MCF 10A (cell line): ENCODE measurements at regions of chr4 and their contacts with region 1.

Region 1: DNA sequence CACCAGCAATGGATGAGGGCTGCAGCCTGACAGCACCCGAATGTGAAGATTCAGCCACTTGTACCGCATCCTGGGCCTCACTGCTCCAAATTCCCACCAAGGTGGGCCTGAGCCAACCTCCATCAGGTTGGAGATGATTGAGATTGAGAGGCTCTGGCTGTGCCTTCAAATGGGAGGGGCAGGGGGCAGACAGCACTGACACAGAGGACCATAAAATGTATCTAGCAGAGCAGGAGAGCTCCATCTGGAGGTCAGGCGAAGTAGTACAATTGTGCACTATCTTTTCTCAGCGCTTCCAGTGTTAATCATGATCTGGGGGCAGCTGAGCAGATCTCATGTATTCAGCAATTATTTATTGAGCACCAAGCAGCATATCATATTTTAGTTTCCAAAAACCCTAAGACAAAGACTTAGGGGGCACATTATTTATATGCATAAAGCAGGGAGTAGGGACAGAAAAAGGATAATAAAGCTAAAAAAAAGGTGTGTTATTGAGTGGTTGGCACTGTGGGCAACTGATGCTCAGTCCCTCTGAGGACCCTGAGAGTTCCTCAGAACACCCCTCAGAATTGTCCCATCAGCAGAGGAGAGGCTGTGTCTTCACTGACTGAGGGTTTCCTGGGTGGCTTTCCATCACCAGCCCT is 31.6 kb upstream of the C1QTNF7 start:
- DNase-seq: peak; percentile 63
- H3K4me3 Mint-ChIP-seq: no peak overlapping the region
- H3K27ac Mint-ChIP-seq: no peak overlapping the region
- H3K4me1 Mint-ChIP-seq: peaks cover 32% of the 10 kb centered on the region
- H3K27me3 Mint-ChIP-seq: no peaks in the 10 kb centered on the region
- CTCF ChIP-seq: peak; percentile 46

Region 2: DNA sequence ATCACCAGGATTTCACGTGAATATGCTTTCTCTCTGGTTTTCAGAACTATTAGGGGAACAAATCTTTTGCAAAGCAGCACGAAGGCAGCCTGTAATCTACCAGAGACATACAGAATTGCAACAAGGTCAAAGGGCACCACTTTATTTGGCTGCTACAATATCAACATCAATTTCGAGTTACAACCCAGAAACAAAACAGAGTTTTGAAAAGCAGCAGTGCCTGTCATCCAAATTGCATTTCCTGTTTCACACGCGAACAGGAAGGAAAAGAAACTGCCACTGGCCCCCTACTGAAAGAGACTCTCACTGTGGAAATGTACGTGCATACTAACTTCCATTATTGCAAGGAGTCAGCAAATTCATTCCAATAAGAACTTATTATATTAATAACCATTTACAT is 14.5 kb after region 1 on chr4:
- CTCF ChIA-PET with region 1: interaction called, 11 read pairs
- POLR2A ChIA-PET with region 1: interaction called, 3 read pairs
- intact Hi-C with region 1: no loop called
- DNase-seq: no peak
- H3K4me3 Mint-ChIP-seq: no peak overlapping the region
- H3K27ac Mint-ChIP-seq: no peak overlapping the region
- H3K4me1 Mint-ChIP-seq: peaks cover 5% of the 10 kb centered on the region
- H3K27me3 Mint-ChIP-seq: no peaks in the 10 kb centered on the region
- CTCF ChIP-seq: no peak

Region 3: DNA sequence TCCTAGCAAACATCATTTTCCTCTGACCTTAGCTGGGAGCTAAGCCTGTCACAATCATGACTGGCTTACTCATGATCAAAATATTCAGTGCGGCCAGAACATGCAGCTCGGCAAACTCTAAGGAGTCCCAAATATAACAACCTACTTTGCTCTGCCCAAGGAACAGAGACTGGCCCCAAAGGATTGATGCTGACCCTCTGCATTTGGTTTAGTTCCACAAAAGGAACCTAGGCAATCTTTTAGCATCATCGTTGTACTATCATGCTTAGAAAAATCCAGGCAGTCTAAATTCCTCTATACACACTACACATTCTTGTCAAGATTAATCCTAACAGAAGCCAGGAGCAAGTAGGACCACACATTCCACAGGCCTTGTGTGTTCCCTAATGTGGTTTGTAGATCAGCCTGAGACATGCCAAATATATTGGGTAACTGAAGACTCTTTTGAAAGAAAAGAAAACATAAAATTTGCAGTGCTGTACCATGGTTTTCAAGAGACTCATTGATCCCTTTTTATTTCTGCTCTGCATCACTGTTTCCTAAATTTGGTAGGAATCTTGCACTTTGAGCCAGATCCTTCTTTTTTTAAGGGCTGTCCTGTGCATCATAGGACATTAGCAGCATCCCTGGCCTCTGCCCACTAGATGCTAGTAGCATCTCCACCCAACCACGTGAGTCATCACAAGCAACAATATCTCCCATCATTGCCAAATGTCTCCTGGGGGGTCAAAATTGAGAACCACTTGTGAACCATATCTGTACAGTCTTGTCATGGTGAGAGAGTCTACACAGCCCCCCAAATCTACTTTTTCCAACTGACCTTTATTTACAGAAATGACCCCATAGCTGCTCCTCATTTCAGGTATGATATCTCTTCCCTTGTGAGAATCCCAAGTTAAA is 55.8 kb after region 1 on chr4:
- CTCF ChIA-PET with region 1: interaction called, 40 read pairs
- POLR2A ChIA-PET with region 1: interaction called, 5 read pairs
- intact Hi-C with region 1: loop called (anchors 1 kb)
- DNase-seq: peak; percentile 80
- H3K4me3 Mint-ChIP-seq: no peak overlapping the region
- H3K27ac Mint-ChIP-seq: peak overlapping the region; percentile 5
- H3K4me1 Mint-ChIP-seq: peaks cover 30% of the 10 kb centered on the region
- H3K27me3 Mint-ChIP-seq: no peaks in the 10 kb centered on the region
- CTCF ChIP-seq: no peak